ENCODE measurements at regions of chr2 and their contacts with region 1.

Region 1: GRCh38 chr2:2743164-2743571 is 412.1 kb upstream of the MYT1L start:
- DNase-seq: no peak
- ATAC-seq: no peak
- H3K4me3 ChIP-seq: no peak overlapping the region
- H3K27ac ChIP-seq: no peak overlapping the region
- H3K4me1 ChIP-seq: no peaks in the 10 kb centered on the region
- H3K27me3 ChIP-seq: 0 out of 2 replicates have a peak, but pooled peaks cover 4% of the 10 kb centered on the region
- CTCF ChIP-seq: no peak

Region 2: DNA sequence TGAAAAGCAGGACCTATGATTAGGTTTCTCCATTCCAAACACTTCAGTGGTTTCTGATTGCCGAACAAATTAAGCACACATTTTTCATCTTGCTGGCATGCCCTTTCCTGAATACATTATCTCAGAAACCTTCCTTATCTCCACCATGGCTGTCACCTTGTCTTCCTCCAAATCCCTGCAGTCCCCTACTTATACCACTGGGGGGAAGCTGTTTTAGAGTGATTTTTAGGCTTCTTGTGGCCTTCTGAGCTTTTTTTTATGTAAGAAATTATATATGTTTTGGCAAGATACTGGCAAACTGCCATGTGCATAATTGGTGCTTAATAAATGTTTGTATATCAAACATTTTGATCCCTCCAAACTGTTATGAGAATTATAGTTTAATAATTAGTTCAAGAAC is 641.2 kb before region 1 on chr2:
- CTCF ChIA-PET with region 1: interaction called, 11 read pairs
- POLR2A ChIA-PET with region 1: no interaction called
- in situ Hi-C with region 1: no loop called
- intact Hi-C with region 1: no loop called
- DNase-seq: no peak
- ATAC-seq: no peak
- H3K4me3 ChIP-seq: no peak overlapping the region
- H3K27ac ChIP-seq: no peak overlapping the region
- H3K4me1 ChIP-seq: no peaks in the 10 kb centered on the region
- H3K27me3 ChIP-seq: peaks cover 5% of the 10 kb centered on the region; the same call in 1 of the 2 replicates
- CTCF ChIP-seq: no peak; the same call in 1 of the 2 replicates

Region 3: DNA sequence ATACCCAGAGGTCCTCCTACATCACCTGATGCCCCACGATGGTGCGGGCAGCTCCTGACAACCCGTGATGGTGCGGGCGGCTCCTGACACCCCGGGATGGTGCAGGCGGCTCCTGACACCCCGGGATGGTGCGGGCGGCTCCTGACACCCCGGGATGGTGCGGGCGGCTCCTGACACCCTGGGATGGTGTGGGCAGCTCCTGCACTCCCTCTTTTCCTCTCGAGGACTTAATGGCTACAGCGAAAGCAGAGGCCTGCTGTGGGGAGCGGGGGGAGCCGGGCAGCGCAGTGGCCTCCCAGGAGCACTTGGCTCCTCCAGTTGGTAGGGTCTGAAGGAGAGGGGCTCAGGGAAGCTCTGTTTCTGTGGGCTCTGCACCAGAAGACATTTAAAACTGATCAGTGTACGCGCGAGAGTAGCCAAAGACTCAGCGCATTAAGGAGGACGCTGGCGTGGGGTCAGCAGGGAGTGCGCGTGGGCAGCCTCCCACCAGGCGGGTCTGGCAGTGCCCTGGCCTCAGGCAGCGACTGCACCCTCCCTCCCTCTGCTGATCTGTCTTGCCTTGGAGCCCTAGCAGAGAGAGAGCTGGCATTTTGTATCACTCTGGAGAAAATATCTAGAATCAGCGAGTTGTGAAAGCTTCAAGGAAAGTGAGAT is 52.4 kb after region 1 on chr2:
- CTCF ChIA-PET with region 1: no interaction called
- POLR2A ChIA-PET with region 1: no interaction called
- in situ Hi-C with region 1: no loop called
- intact Hi-C with region 1: no loop called
- DNase-seq: no peak
- ATAC-seq: no peak
- H3K4me3 ChIP-seq: no peak overlapping the region
- H3K27ac ChIP-seq: no peak overlapping the region
- H3K4me1 ChIP-seq: no peaks in the 10 kb centered on the region
- H3K27me3 ChIP-seq: peaks cover 5% of the 10 kb centered on the region; the same call in 1 of the 2 replicates
- CTCF ChIP-seq: no peak

Region 4: DNA sequence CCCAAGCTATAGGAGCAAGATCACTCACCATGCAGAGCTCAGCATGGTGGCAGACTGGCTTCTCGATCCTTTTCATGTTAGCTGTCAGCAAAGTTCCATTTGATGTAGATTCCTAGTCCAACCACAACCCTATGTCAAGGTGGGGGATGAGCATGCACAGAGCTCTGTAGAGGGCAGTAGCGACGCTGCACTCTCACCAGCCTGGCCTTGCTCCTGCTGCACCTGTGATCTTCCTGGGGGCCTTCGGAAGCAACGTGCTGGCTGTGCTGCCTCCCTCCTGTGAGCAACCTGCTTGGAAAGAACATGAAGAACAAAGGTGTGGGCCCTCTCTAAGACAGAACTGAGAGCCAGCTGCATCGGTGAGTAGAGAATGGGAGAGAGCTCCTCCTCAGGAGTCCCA is 67.3 kb after region 1 on chr2:
- CTCF ChIA-PET with region 1: no interaction called
- POLR2A ChIA-PET with region 1: no interaction called
- in situ Hi-C with region 1: no loop called
- intact Hi-C with region 1: no loop called
- DNase-seq: no peak
- ATAC-seq: no peak
- H3K4me3 ChIP-seq: no peak overlapping the region
- H3K27ac ChIP-seq: no peak overlapping the region
- H3K4me1 ChIP-seq: no peaks in the 10 kb centered on the region
- H3K27me3 ChIP-seq: peaks cover 3% of the 10 kb centered on the region; the same call in 1 of the 2 replicates
- CTCF ChIP-seq: no peak

Region 5: GRCh38 chr2:2938481-2938880 is 195.3 kb after region 1 on chr2:
- CTCF ChIA-PET with region 1: no interaction called
- POLR2A ChIA-PET with region 1: no interaction called
- in situ Hi-C with region 1: no loop called
- intact Hi-C with region 1: no loop called
- DNase-seq: no peak
- ATAC-seq: no peak
- H3K4me3 ChIP-seq: no peak overlapping the region
- H3K27ac ChIP-seq: no peak overlapping the region
- H3K4me1 ChIP-seq: no peaks in the 10 kb centered on the region
- H3K27me3 ChIP-seq: no peaks in the 10 kb centered on the region
- CTCF ChIP-seq: no peak

Region 6: DNA sequence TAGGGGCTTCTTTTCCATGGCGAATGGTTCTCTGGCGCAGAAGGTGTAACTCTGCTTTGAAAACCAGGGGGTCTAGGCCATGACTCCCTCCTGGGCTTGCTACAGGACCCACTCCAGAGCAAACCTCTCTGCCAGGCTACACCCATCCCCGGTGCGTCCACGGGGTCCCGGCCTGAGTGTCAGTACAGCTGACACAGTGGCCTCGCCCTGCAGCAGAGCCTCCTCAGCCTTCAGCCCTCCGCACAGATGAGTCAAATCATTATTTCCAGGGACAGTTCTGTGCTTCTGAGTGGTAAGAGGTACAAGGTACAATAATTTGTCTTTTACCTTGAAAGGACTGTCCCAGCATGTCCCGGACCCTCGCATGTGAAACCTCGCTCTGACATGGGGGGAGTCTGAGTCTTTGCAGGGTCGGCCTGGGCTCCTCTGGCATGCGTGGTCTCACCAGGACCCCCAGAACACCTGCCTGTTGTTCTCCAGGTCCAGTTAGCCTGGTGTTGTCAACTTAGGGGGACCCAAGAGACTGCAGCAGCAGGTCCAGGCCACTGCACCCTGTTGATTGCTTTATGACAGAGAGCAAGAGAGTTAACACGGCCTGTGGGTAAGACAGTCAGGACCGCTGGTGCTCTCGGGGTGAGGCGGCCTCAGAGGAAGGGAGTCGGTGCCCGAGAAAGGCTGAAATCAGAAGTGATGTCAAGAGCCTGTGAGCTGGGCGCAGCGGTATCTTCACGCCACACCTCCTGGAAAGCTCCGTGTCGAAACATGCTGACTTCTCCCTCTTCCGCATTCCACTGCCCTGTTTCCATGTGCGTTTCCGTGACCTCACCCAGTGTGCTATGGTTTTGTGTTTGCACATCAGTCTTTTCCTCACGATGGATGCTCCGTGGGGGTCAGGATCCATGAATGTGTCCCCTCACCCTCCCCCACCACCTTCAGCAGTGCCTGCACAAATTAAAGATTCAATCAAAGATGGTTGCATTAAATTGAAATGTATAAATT is 294.3 kb after region 1 on chr2:
- CTCF ChIA-PET with region 1: no interaction called
- POLR2A ChIA-PET with region 1: interaction called, 15 read pairs
- in situ Hi-C with region 1: no loop called
- intact Hi-C with region 1: no loop called
- DNase-seq: no peak
- ATAC-seq: no peak
- H3K4me3 ChIP-seq: no peak overlapping the region
- H3K27ac ChIP-seq: no peak overlapping the region
- H3K4me1 ChIP-seq: no peaks in the 10 kb centered on the region
- H3K27me3 ChIP-seq: no peaks in the 10 kb centered on the region; the same call in 1 of the 2 replicates
- CTCF ChIP-seq: no peak

Measured in Panc1 (cell line).